Endothelial cell of umbilical vein (primary cell): ENCODE measurements at regions of chr2 and their contacts with region 1.

Region 1: DNA sequence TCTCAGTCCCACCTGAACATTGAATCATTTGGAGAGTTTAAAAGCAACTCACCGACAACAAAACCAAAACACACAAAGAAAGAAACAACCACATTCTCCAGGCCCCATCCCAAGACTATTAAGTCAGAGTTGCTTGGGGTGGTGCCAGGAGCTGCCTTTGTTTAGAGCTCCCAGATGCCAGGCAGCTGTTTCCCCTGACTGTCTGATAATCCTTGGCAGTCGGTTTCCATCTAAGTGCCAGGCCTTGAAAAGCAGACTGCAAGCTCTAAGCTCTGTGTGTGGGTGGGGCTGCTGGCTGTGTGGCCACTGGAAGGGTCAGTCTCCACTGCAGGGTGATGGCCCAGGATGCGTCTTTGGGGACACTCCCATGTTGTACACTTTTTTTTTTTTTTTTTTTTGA is 255.3 kb upstream of the AGAP1 start:
- DNase-seq: peak; percentile 86
- H3K4me3 ChIP-seq: no peak overlapping the region
- H3K27ac ChIP-seq: peak overlapping the region; percentile 19
- H3K4me1 ChIP-seq: peaks cover 12% of the 10 kb centered on the region
- H3K27me3 ChIP-seq: no peaks in the 10 kb centered on the region
- CTCF ChIP-seq: no peak
- POLR2A ChIP-seq: no peak

Region 2: GRCh38 chr2:235263205-235264122 is 24.9 kb after region 1 on chr2:
- CTCF ChIA-PET with region 1: no interaction called
- POLR2A ChIA-PET with region 1: no interaction called
- dilution Hi-C with region 1: no loop called
- intact Hi-C with region 1: loop called (anchors 1 kb)
- DNase-seq: peak; percentile 76
- H3K4me3 ChIP-seq: no peak overlapping the region
- H3K27ac ChIP-seq: peak overlapping the region; percentile 40
- H3K4me1 ChIP-seq: peaks cover 21% of the 10 kb centered on the region
- H3K27me3 ChIP-seq: no peaks in the 10 kb centered on the region
- CTCF ChIP-seq: no peak
- POLR2A ChIP-seq: no peak

Region 3: DNA sequence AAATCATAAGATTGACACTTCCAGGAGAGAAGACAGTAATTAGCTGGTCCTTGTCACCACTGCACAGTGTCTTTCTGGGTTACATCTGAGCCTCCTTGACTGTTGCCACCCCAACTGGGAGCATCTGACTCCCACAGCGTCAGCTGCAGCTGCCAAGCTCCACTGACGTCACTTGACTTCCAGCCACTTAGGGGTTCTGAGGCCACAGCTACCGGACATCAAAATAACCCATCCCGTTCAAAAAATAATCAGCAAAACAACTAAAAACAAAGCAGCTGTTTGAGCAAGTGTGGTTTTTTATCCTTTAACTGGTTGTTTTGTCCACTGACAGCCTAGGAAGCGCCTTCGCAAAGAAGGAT is 48.8 kb after region 1 on chr2:
- CTCF ChIA-PET with region 1: no interaction called
- POLR2A ChIA-PET with region 1: no interaction called
- dilution Hi-C with region 1: no loop called
- intact Hi-C with region 1: no loop called
- DNase-seq: no peak
- H3K4me3 ChIP-seq: no peak overlapping the region
- H3K27ac ChIP-seq: no peak overlapping the region
- H3K4me1 ChIP-seq: no peaks in the 10 kb centered on the region
- H3K27me3 ChIP-seq: no peaks in the 10 kb centered on the region
- CTCF ChIP-seq: no peak
- POLR2A ChIP-seq: no peak

Region 4: GRCh38 chr2:235773188-235773928 is 534.8 kb after region 1 on chr2:
- CTCF ChIA-PET with region 1: no interaction called
- POLR2A ChIA-PET with region 1: no interaction called
- dilution Hi-C with region 1: no loop called
- intact Hi-C with region 1: no loop called
- DNase-seq: peak; percentile 42
- H3K4me3 ChIP-seq: no peak overlapping the region
- H3K27ac ChIP-seq: no peak overlapping the region
- H3K4me1 ChIP-seq: peaks cover 5% of the 10 kb centered on the region
- H3K27me3 ChIP-seq: no peaks in the 10 kb centered on the region
- CTCF ChIP-seq: no peak
- POLR2A ChIP-seq: no peak